Breast epithelium (tissue), 4 donors: ENCODE measurements at regions of chr18 and their contacts with region 1.

Region 1: DNA sequence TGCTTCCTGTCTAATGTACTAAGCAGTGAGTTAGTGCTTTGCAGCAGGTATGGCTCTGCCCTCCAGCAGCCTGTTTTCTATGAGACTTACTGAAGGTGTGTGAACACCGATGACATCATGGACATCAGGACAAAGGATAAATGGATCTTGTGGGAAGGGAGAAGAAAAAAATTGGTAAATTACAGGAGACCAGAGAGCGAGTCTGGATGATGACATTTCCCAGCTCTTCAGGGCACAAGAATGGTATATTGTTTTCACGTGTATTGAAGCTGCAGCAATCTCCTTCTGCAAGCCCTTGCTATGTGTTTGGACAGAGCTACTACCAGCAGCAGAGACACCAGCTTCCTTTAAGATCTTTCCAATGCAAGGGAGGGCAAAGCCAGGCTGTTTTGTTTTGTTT is 47.2 kb downstream of the DCC start:
- DNase-seq: no peak
- H3K4me3 ChIP-seq: no peak overlapping the region
- H3K27ac ChIP-seq: no peak overlapping the region
- H3K4me1 ChIP-seq: no peaks in the 10 kb centered on the region
- H3K27me3 ChIP-seq: no peaks in the 10 kb centered on the region
- CTCF ChIP-seq: no peak
- POLR2A ChIP-seq: no peak

Region 2: DNA sequence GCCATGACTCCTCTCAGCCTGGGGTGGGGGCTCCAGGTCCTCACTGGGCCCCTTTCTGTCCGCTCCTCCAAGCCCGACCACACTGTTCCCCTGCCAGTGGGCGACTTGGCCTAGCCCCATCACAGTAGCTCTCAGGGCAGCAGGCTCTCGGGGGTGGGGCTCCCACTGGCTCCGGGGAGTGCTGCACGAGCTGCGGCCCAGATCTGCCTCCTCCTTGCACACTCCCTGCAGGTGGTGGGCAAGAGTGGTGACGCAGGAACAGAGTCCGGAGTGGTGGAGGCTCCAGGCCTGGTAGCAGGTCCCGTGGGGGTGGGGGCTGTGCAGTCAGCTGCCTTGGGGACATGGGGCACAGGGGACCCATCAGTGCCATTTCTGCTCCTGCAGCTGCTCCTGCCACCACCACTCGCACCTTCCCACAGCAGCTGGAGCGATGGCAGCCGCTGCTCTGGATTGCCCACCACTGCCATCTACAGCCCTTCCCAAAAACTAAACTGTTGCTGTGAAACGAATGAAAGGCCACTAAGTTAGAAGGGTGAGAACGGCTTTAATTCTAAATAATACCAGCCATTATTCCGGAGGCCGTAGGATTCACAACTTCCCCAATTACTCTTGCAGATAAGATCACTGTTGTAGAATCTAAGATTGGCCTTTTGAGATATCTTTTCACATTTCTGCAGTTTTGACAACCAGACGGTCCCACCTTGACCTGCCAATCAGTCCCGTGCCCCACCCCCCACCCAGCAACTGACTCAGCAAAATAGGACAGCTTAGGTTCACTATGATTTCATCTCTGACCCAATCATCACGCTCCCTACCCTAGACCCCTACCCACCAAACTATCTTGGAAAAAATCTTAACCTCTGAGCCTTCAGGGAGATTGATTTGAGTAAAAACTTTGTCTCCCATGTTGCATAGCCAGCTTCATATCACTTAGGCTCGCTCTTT is 483.1 kb after region 1 on chr18:
- intact Hi-C with region 1: no loop called
- DNase-seq: no peak
- H3K4me3 ChIP-seq: no peak overlapping the region
- H3K27ac ChIP-seq: no peak overlapping the region
- H3K4me1 ChIP-seq: no peaks in the 10 kb centered on the region
- H3K27me3 ChIP-seq: no peaks in the 10 kb centered on the region
- CTCF ChIP-seq: no peak
- POLR2A ChIP-seq: no peak

Region 3: DNA sequence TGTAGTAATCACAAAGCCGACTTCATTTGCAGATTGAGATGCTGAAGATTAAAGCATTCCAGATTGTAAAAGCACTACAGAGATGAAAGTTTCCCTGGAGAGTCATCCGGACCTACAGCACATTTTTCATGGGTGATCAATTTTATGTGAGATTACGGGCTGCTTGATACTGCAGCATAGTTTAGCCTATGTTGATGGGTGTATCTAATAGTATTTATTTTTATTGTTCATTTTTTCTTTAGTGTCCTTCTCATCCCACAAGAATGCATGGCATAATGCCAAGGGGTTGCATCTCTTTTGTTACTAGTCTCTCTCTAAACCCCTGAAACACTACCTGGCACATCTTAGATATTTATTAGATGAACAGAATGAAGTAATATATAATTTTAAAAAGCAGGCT is 1596.8 kb after region 1 on chr18:
- intact Hi-C with region 1: loop called (anchors 10 kb)
- DNase-seq: no peak
- H3K4me3 ChIP-seq: no peak overlapping the region
- H3K27ac ChIP-seq: no peak overlapping the region
- H3K4me1 ChIP-seq: no peaks in the 10 kb centered on the region
- H3K27me3 ChIP-seq: no peaks in the 10 kb centered on the region
- CTCF ChIP-seq: no peak
- POLR2A ChIP-seq: no peak